CD4-positive, alpha-beta memory T cell (primary cell): ENCODE measurements at regions of chr12 and their contacts with region 1.

Region 1: GRCh38 chr12:101830367-101831325 is at the start of gene GNPTAB:
- DNase-seq: peak; percentile 94 to 98 (median 95)
- H3K4me3 ChIP-seq: peak within 1 kb of the TSS; percentile 40 to 83
- H3K4me3 Mint-ChIP-seq: peak within 1 kb of the TSS; percentile 95 to 99 (median 97)
- H3K27ac ChIP-seq: peak within 1 kb of the TSS; percentile 57
- H3K27ac Mint-ChIP-seq: peak within 1 kb of the TSS; percentile 90 to 97 (median 95)
- H3K4me1 ChIP-seq: peaks cover 32% of the 10 kb centered on the region
- H3K4me1 Mint-ChIP-seq: peaks cover 20 to 46% (median 34%) of the 10 kb centered on the region in 4 donors
- H3K27me3 ChIP-seq: no peaks in the 10 kb centered on the region
- H3K27me3 Mint-ChIP-seq: no peaks in the 10 kb centered on the region
- total RNA-seq, gene GNPTAB: 37.2 to 42.8 TPM

Region 2: DNA sequence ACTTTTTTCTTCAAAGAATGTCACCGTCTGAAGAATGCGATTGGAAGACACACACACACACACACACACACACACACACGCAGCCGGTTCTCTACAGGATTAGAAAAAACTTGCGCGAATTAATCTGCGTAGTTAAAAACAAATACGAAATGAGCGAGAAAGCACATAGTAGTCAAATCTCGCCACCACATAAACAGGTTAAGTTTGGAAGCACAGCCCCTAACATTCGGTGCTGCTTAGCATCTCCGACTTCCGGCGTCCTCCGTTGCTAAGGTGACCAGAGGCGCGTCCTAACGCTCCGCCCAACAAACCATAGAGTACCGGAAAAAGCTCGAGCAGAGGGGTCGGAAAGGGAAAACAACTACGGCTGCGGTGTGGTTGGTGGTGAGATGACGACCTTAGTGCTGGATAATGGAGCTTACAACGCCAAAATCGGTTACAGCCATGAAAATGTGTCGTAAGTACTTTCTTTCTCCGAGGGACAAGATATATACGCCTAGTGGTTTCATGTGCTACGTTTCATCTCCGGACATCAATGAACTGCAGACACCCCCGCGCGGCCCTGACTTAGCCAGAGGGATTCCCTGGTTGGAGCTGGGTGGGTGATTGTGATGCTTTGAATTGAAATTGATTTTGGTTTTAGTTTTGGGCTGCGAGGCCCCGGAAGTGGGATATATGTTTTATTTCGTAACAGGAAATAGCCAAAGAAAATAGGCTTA is 1630.0 kb before region 1 on chr12 and contains the start of gene ACTR6:
- CTCF ChIA-PET with region 1: no interaction called
- POLR2A ChIA-PET with region 1: interaction called, 3 read pairs
- intact Hi-C with region 1: loop called (anchors 2 kb)
- DNase-seq: peak; percentile 97 to 99 (median 98)
- H3K4me3 ChIP-seq: peak within 1 kb of the TSS; percentile 61 to 88
- H3K4me3 Mint-ChIP-seq: peak within 1 kb of the TSS; percentile 97 to 100 (median 98)
- H3K27ac ChIP-seq: peak within 1 kb of the TSS; percentile 91
- H3K27ac Mint-ChIP-seq: peak within 1 kb of the TSS; percentile 98 to 100 (median 100)
- H3K4me1 ChIP-seq: peaks cover 42% of the 10 kb centered on the region
- H3K4me1 Mint-ChIP-seq: peaks cover 17 to 58% (median 35%) of the 10 kb centered on the region in 4 donors
- H3K27me3 ChIP-seq: no peaks in the 10 kb centered on the region
- H3K27me3 Mint-ChIP-seq: no peaks in the 10 kb centered on the region
- total RNA-seq, gene ACTR6: 45.6 to 51.0 TPM

Region 3: GRCh38 chr12:101414533-101415119 is 416.0 kb before region 1 on chr12:
- CTCF ChIA-PET with region 1: no interaction called
- POLR2A ChIA-PET with region 1: no interaction called
- intact Hi-C with region 1: loop called (anchors 2 kb)
- DNase-seq: peak; percentile 3 to 32 (median 21)
- H3K4me3 ChIP-seq: no peak overlapping the region
- H3K4me3 Mint-ChIP-seq: no peak overlapping the region
- H3K27ac ChIP-seq: no peak overlapping the region
- H3K27ac Mint-ChIP-seq: no peak overlapping the region
- H3K4me1 ChIP-seq: no peaks in the 10 kb centered on the region
- H3K4me1 Mint-ChIP-seq: no peaks in the 10 kb centered on the region
- H3K27me3 ChIP-seq: no peaks in the 10 kb centered on the region
- H3K27me3 Mint-ChIP-seq: peaks cover 0 to 1% of the 10 kb centered on the region in 2 donors

Region 4: GRCh38 chr12:101773650-101774162 is 56.9 kb before region 1 on chr12:
- CTCF ChIA-PET with region 1: interaction called, 458 read pairs
- POLR2A ChIA-PET with region 1: interaction called, 21 read pairs
- intact Hi-C with region 1: loop called (anchors 1 kb)
- DNase-seq: peak; percentile 47 to 72 (median 69)
- H3K4me3 ChIP-seq: no peak overlapping the region
- H3K4me3 Mint-ChIP-seq: no peak overlapping the region
- H3K27ac ChIP-seq: no peak overlapping the region
- H3K27ac Mint-ChIP-seq: peak overlapping the region in 2 of 7 donors; percentile 3 to 69
- H3K4me1 ChIP-seq: no peaks in the 10 kb centered on the region
- H3K4me1 Mint-ChIP-seq: peaks cover 0 to 4% (median 2%) of the 10 kb centered on the region in 4 donors
- H3K27me3 ChIP-seq: no peaks in the 10 kb centered on the region
- H3K27me3 Mint-ChIP-seq: no peaks in the 10 kb centered on the region

Region 5: DNA sequence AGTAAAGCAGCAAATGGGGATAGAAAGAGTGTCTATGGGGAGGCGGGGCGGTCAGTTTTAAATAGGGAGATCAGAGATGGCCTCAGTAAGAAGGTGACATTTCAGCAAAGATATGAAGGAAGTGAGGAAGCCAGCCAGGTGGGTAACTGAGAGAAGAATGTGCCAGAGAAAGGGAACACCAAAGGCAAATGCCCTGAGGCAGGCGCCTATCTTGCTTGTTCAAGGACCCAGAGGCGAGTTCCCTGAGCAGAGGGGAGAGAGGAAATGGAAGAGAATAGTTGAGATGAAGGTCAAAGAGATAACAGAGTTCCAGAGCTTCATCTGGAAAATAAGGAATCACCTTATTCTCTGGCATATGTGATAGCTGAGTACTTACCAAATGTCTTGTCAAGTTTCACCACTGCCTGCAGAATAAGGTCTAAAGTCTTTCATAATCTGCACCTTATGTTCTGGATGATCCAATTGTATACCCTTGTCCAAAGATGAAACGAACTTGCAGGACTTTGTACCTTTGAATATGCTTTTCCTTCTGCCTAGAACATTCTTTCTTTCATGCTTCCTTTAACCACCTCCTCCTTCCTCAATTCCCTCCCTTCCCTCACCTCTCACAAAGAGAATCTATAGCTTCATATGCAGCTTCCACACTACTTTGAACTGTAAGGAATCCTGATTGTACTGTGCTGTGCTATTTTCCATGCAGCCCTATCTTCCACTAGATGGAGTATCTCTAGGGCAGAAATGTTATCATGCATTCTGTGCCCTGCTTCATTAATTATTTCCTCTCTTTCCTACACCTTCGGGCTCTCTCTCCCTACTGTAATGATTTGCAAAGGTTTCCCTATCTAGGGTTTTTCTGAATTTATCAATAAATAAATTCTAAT is 38.4 kb before region 1 on chr12:
- CTCF ChIA-PET with region 1: interaction called, 74 read pairs
- POLR2A ChIA-PET with region 1: interaction called, 12 read pairs
- intact Hi-C with region 1: loop called (anchors 1 kb)
- DNase-seq: peak in 1 of 5 donors; percentile 6
- H3K4me3 ChIP-seq: no peak overlapping the region
- H3K4me3 Mint-ChIP-seq: no peak overlapping the region
- H3K27ac ChIP-seq: no peak overlapping the region
- H3K27ac Mint-ChIP-seq: peak overlapping the region in 5 of 7 donors; percentile 18 to 77 (median 47)
- H3K4me1 ChIP-seq: peaks cover 5% of the 10 kb centered on the region
- H3K4me1 Mint-ChIP-seq: peaks cover 5 to 13% (median 10%) of the 10 kb centered on the region in 4 donors
- H3K27me3 ChIP-seq: no peaks in the 10 kb centered on the region
- H3K27me3 Mint-ChIP-seq: no peaks in the 10 kb centered on the region

Region 6: GRCh38 chr12:102061560-102062418 is 231.1 kb after region 1 on chr12 and contains the start of gene WASHC3:
- CTCF ChIA-PET with region 1: no interaction called
- POLR2A ChIA-PET with region 1: no interaction called
- intact Hi-C with region 1: loop called (anchors 2 kb)
- DNase-seq: peak; percentile 94 to 97 (median 94)
- H3K4me3 ChIP-seq: peak within 1 kb of the TSS; percentile 59 to 78
- H3K4me3 Mint-ChIP-seq: peak within 1 kb of the TSS; percentile 94 to 100 (median 98)
- H3K27ac ChIP-seq: peak within 1 kb of the TSS; percentile 97
- H3K27ac Mint-ChIP-seq: peak within 1 kb of the TSS; percentile 98 to 99 (median 99)
- H3K4me1 ChIP-seq: peaks cover 31% of the 10 kb centered on the region
- H3K4me1 Mint-ChIP-seq: peaks cover 27 to 46% (median 36%) of the 10 kb centered on the region in 4 donors
- H3K27me3 ChIP-seq: no peaks in the 10 kb centered on the region
- H3K27me3 Mint-ChIP-seq: peaks cover 2 to 3% of the 10 kb centered on the region in 2 donors
- total RNA-seq, gene WASHC3: 44.6 to 46.5 TPM

Region 7: DNA sequence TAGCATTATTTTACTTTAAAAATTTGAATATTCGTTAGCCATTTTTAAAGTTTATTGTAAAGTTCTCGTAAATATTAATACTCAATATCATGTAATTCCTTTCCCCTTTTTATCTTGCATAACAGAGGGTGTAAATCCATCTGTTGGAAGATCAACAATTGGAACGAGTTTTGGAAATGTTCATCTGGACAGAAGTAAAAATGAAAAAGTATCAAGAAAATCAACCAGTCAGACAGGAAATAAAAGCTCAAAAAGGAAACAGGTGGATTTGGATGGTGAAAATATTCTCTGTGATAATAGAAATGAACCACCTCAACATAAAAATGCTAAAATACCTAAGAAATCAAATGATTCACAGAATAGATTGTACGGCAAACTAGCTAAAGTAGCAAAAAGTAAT is 365.2 kb after region 1 on chr12:
- CTCF ChIA-PET with region 1: no interaction called
- POLR2A ChIA-PET with region 1: no interaction called
- intact Hi-C with region 1: no loop called
- DNase-seq: no peak
- H3K4me3 ChIP-seq: no peak overlapping the region
- H3K4me3 Mint-ChIP-seq: no peak overlapping the region
- H3K27ac ChIP-seq: no peak overlapping the region
- H3K27ac Mint-ChIP-seq: no peak overlapping the region
- H3K4me1 ChIP-seq: no peaks in the 10 kb centered on the region
- H3K4me1 Mint-ChIP-seq: no peaks in the 10 kb centered on the region
- H3K27me3 ChIP-seq: no peaks in the 10 kb centered on the region
- H3K27me3 Mint-ChIP-seq: no peaks in the 10 kb centered on the region

Region 8: GRCh38 chr12:102215992-102216691 is 385.5 kb after region 1 on chr12:
- CTCF ChIA-PET with region 1: no interaction called
- POLR2A ChIA-PET with region 1: no interaction called
- intact Hi-C with region 1: no loop called
- DNase-seq: no peak
- H3K4me3 ChIP-seq: no peak overlapping the region
- H3K4me3 Mint-ChIP-seq: no peak overlapping the region
- H3K27ac ChIP-seq: no peak overlapping the region
- H3K27ac Mint-ChIP-seq: no peak overlapping the region
- H3K4me1 ChIP-seq: no peaks in the 10 kb centered on the region
- H3K4me1 Mint-ChIP-seq: no peaks in the 10 kb centered on the region
- H3K27me3 ChIP-seq: no peaks in the 10 kb centered on the region
- H3K27me3 Mint-ChIP-seq: no peaks in the 10 kb centered on the region

Region 9: GRCh38 chr12:102728506-102729242 is 898.0 kb after region 1 on chr12:
- CTCF ChIA-PET with region 1: no interaction called
- POLR2A ChIA-PET with region 1: no interaction called
- intact Hi-C with region 1: no loop called
- DNase-seq: no peak
- H3K4me3 ChIP-seq: no peak overlapping the region
- H3K4me3 Mint-ChIP-seq: no peak overlapping the region
- H3K27ac ChIP-seq: no peak overlapping the region
- H3K27ac Mint-ChIP-seq: no peak overlapping the region
- H3K4me1 ChIP-seq: no peaks in the 10 kb centered on the region
- H3K4me1 Mint-ChIP-seq: no peaks in the 10 kb centered on the region
- H3K27me3 ChIP-seq: no peaks in the 10 kb centered on the region
- H3K27me3 Mint-ChIP-seq: no peaks in the 10 kb centered on the region